Colonic mucosa (tissue), 4 donors: ENCODE measurements at regions of chr5 and their contacts with region 1.

Region 1: GRCh38 chr5:36305571-36306326 is 4.0 kb upstream of the RANBP3L start:
- DNase-seq: peak; percentile 24
- H3K4me3 ChIP-seq: no peak overlapping the region
- H3K27ac ChIP-seq: no peak overlapping the region
- H3K4me1 ChIP-seq: no peaks in the 10 kb centered on the region
- H3K27me3 ChIP-seq: no peaks in the 10 kb centered on the region
- CTCF ChIP-seq: peak; percentile 53

Region 2: DNA sequence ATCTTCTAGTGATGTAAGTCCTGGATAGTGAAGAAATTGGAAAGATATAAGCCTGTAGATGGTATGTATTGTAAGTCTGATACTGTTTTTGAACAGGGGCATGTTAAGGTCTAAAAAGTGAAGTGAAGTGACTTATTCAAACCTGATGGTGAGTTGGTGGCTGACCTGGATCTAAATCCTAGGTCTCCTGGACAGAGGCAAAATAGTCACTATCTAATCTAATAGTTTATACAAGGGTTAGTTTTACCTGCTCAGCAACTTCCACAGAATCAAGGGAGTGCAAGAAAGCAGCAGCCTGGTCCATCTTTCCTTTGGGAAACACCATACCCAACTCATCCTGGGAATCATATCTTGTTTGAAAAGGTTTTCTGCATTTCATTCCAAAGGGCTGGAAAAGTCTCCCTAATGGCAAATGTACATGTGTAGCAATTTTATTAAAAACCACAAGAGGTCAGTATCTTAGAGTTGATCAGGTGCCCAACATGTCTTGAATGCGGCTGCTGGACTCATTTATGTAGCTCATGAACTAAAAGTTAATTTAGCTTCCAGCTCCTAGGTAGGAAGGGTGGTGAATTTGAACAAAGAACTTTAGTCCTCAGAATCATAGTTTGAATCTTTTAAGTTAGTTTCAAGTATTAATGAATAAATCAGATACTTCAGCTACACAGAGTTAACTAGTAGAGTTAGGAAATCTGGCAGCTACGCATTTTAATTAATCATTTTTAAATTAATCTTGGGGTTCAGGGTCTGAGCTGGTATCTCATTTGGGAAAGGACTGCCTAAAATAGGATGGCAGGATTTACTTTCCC is 127.8 kb before region 1 on chr5:
- intact Hi-C with region 1: loop called (anchors 10 kb)
- DNase-seq: no peak
- H3K4me3 ChIP-seq: no peak overlapping the region
- H3K27ac ChIP-seq: no peak overlapping the region
- H3K4me1 ChIP-seq: no peaks in the 10 kb centered on the region
- H3K27me3 ChIP-seq: no peaks in the 10 kb centered on the region
- CTCF ChIP-seq: peak; percentile 45

Region 3: DNA sequence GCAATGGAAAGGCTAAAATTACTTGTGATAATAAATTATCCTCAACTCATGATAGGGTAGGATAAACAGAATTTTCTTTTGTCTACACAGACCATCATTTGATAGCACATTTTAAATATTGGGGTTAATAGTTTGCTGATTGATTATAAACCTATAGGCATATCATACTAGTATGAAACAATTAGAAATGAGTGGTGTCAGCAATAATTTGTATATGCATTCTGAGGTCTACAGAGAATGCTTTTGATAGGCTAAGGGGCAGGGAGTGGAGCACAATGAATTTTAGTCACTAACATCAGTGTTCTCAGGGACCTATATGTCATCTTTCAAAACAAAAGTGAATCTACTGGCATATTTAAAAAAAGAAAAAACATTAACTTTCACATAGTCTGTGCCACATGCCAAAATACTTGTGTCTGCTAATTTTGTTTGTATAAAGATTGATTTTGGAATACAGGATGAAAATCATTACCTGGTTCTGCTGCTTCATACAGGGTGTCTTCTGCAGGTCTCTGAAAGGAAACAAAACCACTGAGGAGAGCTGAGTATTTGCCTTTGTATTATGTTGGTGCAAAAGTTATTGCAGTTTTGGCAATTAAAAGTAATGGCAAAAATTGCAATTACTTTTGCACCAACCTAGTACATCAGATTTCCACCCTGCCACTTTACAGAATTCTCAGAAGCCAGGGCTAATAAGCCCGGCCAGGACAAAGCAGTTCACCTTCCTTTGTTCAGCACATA is 36.1 kb before region 1 on chr5:
- intact Hi-C with region 1: loop called (anchors 5 kb)
- DNase-seq: no peak
- H3K4me3 ChIP-seq: no peak overlapping the region
- H3K27ac ChIP-seq: no peak overlapping the region
- H3K4me1 ChIP-seq: no peaks in the 10 kb centered on the region
- H3K27me3 ChIP-seq: no peaks in the 10 kb centered on the region
- CTCF ChIP-seq: no peak